CD8-positive, alpha-beta T cell (primary cell): ENCODE measurements at regions of chr1 and their contacts with region 1.

Region 1: GRCh38 chr1:107142140-107142542 is 1.3 kb downstream of the NTNG1 start:
- DNase-seq: peak in 2 of 9 experiments; percentile 23 to 40
- ATAC-seq: no peak
- H3K4me3 ChIP-seq: no peak overlapping the region
- H3K4me3 Mint-ChIP-seq: peak overlapping the region; percentile 78
- H3K27ac ChIP-seq: no peak overlapping the region
- H3K27ac Mint-ChIP-seq: no peak overlapping the region
- H3K4me1 ChIP-seq: peaks cover 7% of the 10 kb centered on the region
- H3K4me1 Mint-ChIP-seq: peaks cover 21% of the 10 kb centered on the region
- H3K27me3 ChIP-seq: peaks cover 4 to 13% of the 10 kb centered on the region in 2 experiments
- H3K27me3 Mint-ChIP-seq: peaks cover 46% of the 10 kb centered on the region
- CTCF ChIP-seq: peak; percentile 74

Region 2: GRCh38 chr1:107047556-107047955 is 94.6 kb before region 1 on chr1:
- CTCF ChIA-PET with region 1: interaction called, 4 read pairs
- POLR2A ChIA-PET with region 1: no interaction called
- intact Hi-C with region 1: loop called (anchors 2 to 5 kb)
- DNase-seq: no peak
- ATAC-seq: no peak
- H3K4me3 ChIP-seq: no peak overlapping the region
- H3K4me3 Mint-ChIP-seq: no peak overlapping the region
- H3K27ac ChIP-seq: no peak overlapping the region
- H3K27ac Mint-ChIP-seq: no peak overlapping the region
- H3K4me1 ChIP-seq: no peaks in the 10 kb centered on the region
- H3K4me1 Mint-ChIP-seq: no peaks in the 10 kb centered on the region
- H3K27me3 ChIP-seq: no peaks in the 10 kb centered on the region
- H3K27me3 Mint-ChIP-seq: peaks cover 7% of the 10 kb centered on the region
- CTCF ChIP-seq: no peak

Region 3: DNA sequence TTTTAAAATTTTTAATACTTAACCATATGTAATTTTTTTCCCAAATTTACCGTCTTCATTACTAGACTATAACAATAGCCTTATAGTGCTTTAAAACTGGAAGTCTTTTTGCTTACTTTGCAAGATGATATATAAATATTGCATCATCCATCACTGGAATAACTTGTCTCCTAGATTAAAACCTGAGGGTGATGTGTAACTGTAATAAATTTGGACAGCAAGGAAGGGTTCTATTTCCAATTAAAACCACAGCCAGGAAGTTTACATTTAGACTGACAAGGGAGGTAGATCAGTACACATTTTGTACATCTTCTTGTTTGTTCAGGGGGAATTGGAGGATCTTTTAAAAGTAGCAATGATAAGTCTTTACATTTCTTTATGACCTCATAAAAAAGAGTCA is 20.6 kb after region 1 on chr1:
- CTCF ChIA-PET with region 1: no interaction called
- POLR2A ChIA-PET with region 1: no interaction called
- intact Hi-C with region 1: no loop called
- DNase-seq: no peak
- ATAC-seq: no peak
- H3K4me3 ChIP-seq: no peak overlapping the region
- H3K4me3 Mint-ChIP-seq: no peak overlapping the region
- H3K27ac ChIP-seq: no peak overlapping the region
- H3K27ac Mint-ChIP-seq: no peak overlapping the region
- H3K4me1 ChIP-seq: no peaks in the 10 kb centered on the region
- H3K4me1 Mint-ChIP-seq: no peaks in the 10 kb centered on the region
- H3K27me3 ChIP-seq: peaks cover 0 to 5% of the 10 kb centered on the region in 2 experiments
- H3K27me3 Mint-ChIP-seq: peaks cover 2% of the 10 kb centered on the region
- CTCF ChIP-seq: no peak

Region 4: GRCh38 chr1:107662971-107663370 is 520.8 kb after region 1 on chr1:
- CTCF ChIA-PET with region 1: no interaction called
- POLR2A ChIA-PET with region 1: no interaction called
- intact Hi-C with region 1: no loop called
- DNase-seq: no peak
- ATAC-seq: no peak
- H3K4me3 ChIP-seq: no peak overlapping the region
- H3K4me3 Mint-ChIP-seq: no peak overlapping the region
- H3K27ac ChIP-seq: no peak overlapping the region
- H3K27ac Mint-ChIP-seq: no peak overlapping the region
- H3K4me1 ChIP-seq: no peaks in the 10 kb centered on the region
- H3K4me1 Mint-ChIP-seq: no peaks in the 10 kb centered on the region
- H3K27me3 ChIP-seq: no peaks in the 10 kb centered on the region
- H3K27me3 Mint-ChIP-seq: no peaks in the 10 kb centered on the region
- CTCF ChIP-seq: no peak